ENCODE measurements at regions of chr5 and their contacts with region 1.

Region 1: GRCh38 chr5:407801-408268 is 35.1 kb upstream of the EXOC3 start:
- DNase-seq: peak; percentile 85
- H3K4me3 Mint-ChIP-seq: peak overlapping the region; percentile 62
- H3K27ac Mint-ChIP-seq: peak overlapping the region; percentile 94
- H3K4me1 Mint-ChIP-seq: peaks cover 22% of the 10 kb centered on the region
- H3K27me3 Mint-ChIP-seq: no peaks in the 10 kb centered on the region
- CTCF ChIP-seq: no peak

Region 2: DNA sequence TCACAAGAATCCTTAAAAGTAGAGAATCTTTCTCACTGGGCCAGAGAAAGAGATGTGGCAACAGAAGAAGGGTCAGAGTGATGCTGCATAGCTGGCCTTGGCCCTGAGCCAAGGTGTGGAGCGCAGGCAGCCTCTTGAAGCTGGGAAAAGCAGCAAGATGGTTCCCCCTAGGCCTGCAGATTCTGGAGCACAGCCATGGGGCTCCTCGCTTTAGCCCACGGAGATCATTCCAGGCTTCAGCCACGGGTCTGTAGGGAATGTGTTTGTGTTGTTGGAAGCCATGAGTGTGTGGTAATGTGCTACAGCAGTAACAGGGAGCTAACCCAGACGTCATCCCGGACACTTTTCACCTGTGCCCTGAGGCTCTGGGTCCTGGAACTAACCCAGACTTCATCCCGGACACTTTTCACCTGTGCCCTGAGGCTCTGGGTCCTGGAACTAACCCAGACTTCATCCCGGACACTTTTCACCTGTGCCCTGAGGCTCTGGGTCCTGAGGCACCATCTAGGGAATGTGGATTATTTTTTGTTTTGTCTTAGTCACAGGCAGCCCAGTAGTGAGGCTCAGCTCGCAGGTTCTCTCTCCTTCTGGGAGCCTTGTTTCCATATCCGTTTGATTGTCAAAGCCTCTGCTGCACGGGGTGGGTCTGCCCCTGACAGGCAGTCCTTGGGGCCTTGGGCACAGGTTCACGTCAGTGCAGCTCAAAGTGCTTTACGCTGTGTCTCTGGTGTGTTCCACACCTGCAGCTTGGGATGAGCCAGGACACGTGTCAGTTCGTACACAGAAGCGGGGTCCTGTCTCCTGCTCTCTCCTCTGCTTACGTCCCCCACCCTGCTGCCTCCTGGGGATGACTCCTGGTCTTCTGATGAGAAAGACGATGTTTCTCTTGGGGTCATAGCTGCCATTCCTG is 21.1 kb before region 1 on chr5:
- CTCF ChIA-PET with region 1: no interaction called
- POLR2A ChIA-PET with region 1: interaction called, 26 read pairs
- intact Hi-C with region 1: no loop called
- DNase-seq: peak; percentile 82
- H3K4me3 Mint-ChIP-seq: no peak overlapping the region
- H3K27ac Mint-ChIP-seq: no peak overlapping the region
- H3K4me1 Mint-ChIP-seq: peaks cover 14% of the 10 kb centered on the region
- H3K27me3 Mint-ChIP-seq: no peaks in the 10 kb centered on the region
- CTCF ChIP-seq: no peak

Measured in MCF 10A (cell line).